B cell (primary cell): ENCODE measurements at regions of chr3 and their contacts with region 1.

Region 1: DNA sequence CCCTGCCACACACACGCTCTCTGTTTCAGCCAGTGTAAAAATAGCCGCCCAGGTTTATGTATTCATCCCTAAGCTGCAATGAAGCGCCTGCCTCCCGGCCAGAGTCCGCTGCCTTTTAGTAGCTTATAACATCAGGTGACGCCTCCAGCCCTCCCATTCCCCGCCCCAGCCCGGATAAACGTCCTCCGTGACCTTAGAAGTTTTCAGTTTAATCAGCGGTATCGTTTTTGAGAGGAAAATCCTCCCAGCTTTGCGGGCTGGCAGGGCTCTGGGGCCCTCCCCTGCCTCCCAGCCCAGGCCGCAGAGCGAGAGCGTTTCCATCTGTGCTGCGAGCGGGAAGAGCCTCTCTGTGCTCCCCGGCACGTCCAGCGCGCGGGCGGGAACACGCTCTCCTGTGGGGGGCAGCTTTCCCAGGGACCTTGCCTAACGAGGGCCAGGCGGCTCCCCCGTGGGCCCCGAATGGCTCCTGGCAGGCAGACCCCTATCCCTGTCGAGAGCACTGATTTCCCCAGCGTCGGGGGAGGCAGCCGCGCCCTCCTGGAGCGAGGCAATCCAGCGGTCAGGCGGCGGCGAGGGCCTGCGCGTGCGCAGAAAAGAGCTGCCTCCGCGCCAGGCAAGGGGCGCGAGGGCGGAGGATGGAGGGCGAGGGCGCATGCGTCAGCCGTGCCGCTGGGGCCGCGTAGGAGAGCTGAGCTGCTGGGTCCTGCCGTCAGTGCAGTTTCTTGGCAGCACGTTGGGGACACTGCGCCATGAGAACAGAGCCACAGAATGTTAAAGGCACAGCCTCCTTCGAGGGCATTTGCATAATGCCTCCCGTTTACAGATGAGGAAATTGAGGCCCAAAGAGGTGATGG is 71.1 kb downstream of the CCNL1 start:
- DNase-seq: peak; percentile 96
- ATAC-seq: peak; percentile 91
- H3K4me3 ChIP-seq: peak overlapping the region; percentile 56 to 92 (median 80)
- H3K4me3 Mint-ChIP-seq: peak overlapping the region; percentile 94
- H3K27ac ChIP-seq: peak overlapping the region; percentile 76 to 98
- H3K27ac Mint-ChIP-seq: peak overlapping the region; percentile 98
- H3K4me1 ChIP-seq: peaks cover 19 to 25% of the 10 kb centered on the region in 2 donors
- H3K4me1 Mint-ChIP-seq: peaks cover 25% of the 10 kb centered on the region
- H3K27me3 ChIP-seq: peaks cover 0 to 2% (median 0%) of the 10 kb centered on the region in 4 experiments
- H3K27me3 Mint-ChIP-seq: peaks cover 8% of the 10 kb centered on the region
- CTCF ChIP-seq: no peak

Region 2: DNA sequence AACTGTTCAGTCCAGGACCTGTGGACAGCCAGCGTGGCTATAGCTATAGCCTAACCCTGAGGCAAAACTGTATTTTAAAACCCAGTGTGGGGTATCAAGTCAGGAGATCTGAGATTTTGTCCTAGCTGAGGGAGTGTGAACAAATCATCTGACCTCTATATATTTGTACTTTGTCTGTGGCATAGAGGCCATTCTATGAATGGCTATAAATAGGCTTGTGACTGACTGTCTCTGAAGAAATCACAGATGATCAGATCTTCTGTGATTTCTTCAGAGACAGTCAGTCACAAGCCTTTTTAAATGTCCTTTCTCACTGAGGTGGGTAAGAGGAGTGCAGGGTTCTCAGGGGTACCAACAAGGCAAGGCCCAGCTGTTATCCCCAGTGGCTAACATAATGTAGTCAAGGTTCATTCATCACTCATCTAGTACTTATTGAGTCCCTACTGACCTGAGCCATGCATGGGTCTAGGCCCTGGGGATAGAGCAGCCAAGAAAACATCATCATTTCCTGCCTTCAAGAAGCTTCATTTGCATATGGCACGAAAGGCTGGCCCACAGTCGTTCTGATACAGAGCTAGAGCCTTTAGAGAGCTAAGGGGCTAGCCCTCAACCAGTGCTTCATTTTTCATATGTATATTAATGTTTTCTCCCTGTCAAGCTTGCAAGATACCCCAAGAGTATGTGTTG is 361.2 kb before region 1 on chr3:
- CTCF ChIA-PET with region 1: no interaction called
- POLR2A ChIA-PET with region 1: no interaction called
- intact Hi-C with region 1: no loop called
- DNase-seq: no peak
- ATAC-seq: peak; percentile 58
- H3K4me3 ChIP-seq: no peak overlapping the region
- H3K4me3 Mint-ChIP-seq: no peak overlapping the region
- H3K27ac ChIP-seq: no peak overlapping the region
- H3K27ac Mint-ChIP-seq: no peak overlapping the region
- H3K4me1 ChIP-seq: peaks cover 4 to 6% of the 10 kb centered on the region in 2 donors
- H3K4me1 Mint-ChIP-seq: peaks cover 7% of the 10 kb centered on the region
- H3K27me3 ChIP-seq: no peaks in the 10 kb centered on the region
- H3K27me3 Mint-ChIP-seq: no peaks in the 10 kb centered on the region
- CTCF ChIP-seq: no peak

Region 3: DNA sequence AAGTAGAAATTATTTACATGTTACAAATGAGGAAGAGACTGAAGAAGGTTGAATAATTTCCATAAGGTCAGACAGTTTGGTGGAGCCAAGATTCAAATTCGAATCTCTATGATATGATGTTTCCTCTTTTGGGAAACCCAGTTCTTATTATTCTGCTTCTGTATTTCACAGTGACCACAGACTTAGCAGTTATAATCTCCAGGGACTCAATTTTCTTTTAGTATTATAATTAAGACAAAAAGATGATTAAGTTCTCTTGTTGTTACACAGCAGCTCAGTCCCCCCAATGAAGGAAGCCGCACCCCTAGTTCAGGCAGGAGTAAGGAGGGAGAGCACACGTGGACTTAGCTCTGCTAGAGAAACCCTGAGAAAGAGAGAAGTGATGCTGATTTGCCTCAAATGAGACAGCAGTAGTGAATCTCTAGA is 59.5 kb before region 1 on chr3:
- CTCF ChIA-PET with region 1: no interaction called
- POLR2A ChIA-PET with region 1: no interaction called
- intact Hi-C with region 1: loop called (anchors 2 kb)
- DNase-seq: peak; percentile 85
- ATAC-seq: peak; percentile 93
- H3K4me3 ChIP-seq: no peak overlapping the region
- H3K4me3 Mint-ChIP-seq: peak overlapping the region; percentile 44
- H3K27ac ChIP-seq: peak overlapping the region in 1 of 2 donors; percentile 17
- H3K27ac Mint-ChIP-seq: peak overlapping the region; percentile 72
- H3K4me1 ChIP-seq: peaks cover 14 to 26% of the 10 kb centered on the region in 2 donors
- H3K4me1 Mint-ChIP-seq: peaks cover 28% of the 10 kb centered on the region
- H3K27me3 ChIP-seq: no peaks in the 10 kb centered on the region
- H3K27me3 Mint-ChIP-seq: no peaks in the 10 kb centered on the region
- CTCF ChIP-seq: no peak

Region 4: GRCh38 chr3:157104928-157105652 is 16.3 kb after region 1 on chr3:
- CTCF ChIA-PET with region 1: interaction called, 3 read pairs
- POLR2A ChIA-PET with region 1: interaction called, 4 read pairs
- intact Hi-C with region 1: loop called (anchors 1 kb)
- DNase-seq: peak; percentile 80
- ATAC-seq: peak; percentile 74
- H3K4me3 ChIP-seq: no peak overlapping the region
- H3K4me3 Mint-ChIP-seq: peak overlapping the region; percentile 16
- H3K27ac ChIP-seq: peak overlapping the region; percentile 23 to 55
- H3K27ac Mint-ChIP-seq: peak overlapping the region; percentile 83
- H3K4me1 ChIP-seq: peaks cover 25 to 36% of the 10 kb centered on the region in 2 donors
- H3K4me1 Mint-ChIP-seq: peaks cover 32% of the 10 kb centered on the region
- H3K27me3 ChIP-seq: no peaks in the 10 kb centered on the region
- H3K27me3 Mint-ChIP-seq: no peaks in the 10 kb centered on the region
- CTCF ChIP-seq: no peak

Region 5: GRCh38 chr3:157174649-157175498 is 86.0 kb after region 1 on chr3:
- CTCF ChIA-PET with region 1: interaction called, 3 read pairs
- POLR2A ChIA-PET with region 1: interaction called, 8 read pairs
- intact Hi-C with region 1: loop called (anchors 1 kb)
- DNase-seq: peak; percentile 99
- ATAC-seq: peak; percentile 91
- H3K4me3 ChIP-seq: peak overlapping the region; percentile 85 to 98 (median 93)
- H3K4me3 Mint-ChIP-seq: peak overlapping the region; percentile 91
- H3K27ac ChIP-seq: peak overlapping the region; percentile 89 to 97
- H3K27ac Mint-ChIP-seq: peak overlapping the region; percentile 97
- H3K4me1 ChIP-seq: peaks cover 19% of the 10 kb centered on the region in 2 donors
- H3K4me1 Mint-ChIP-seq: peaks cover 23% of the 10 kb centered on the region
- H3K27me3 ChIP-seq: no peaks in the 10 kb centered on the region
- H3K27me3 Mint-ChIP-seq: no peaks in the 10 kb centered on the region
- CTCF ChIP-seq: no peak

Region 6: GRCh38 chr3:157311633-157312375 is 223.0 kb after region 1 on chr3:
- CTCF ChIA-PET with region 1: no interaction called
- POLR2A ChIA-PET with region 1: no interaction called
- intact Hi-C with region 1: no loop called
- DNase-seq: no peak
- ATAC-seq: no peak
- H3K4me3 ChIP-seq: no peak overlapping the region
- H3K4me3 Mint-ChIP-seq: no peak overlapping the region
- H3K27ac ChIP-seq: no peak overlapping the region
- H3K27ac Mint-ChIP-seq: no peak overlapping the region
- H3K4me1 ChIP-seq: no peaks in the 10 kb centered on the region
- H3K4me1 Mint-ChIP-seq: no peaks in the 10 kb centered on the region
- H3K27me3 ChIP-seq: no peaks in the 10 kb centered on the region
- H3K27me3 Mint-ChIP-seq: peaks cover 3% of the 10 kb centered on the region
- CTCF ChIP-seq: no peak